ENCODE measurements at regions of chr7 and their contacts with region 1.

Region 1: DNA sequence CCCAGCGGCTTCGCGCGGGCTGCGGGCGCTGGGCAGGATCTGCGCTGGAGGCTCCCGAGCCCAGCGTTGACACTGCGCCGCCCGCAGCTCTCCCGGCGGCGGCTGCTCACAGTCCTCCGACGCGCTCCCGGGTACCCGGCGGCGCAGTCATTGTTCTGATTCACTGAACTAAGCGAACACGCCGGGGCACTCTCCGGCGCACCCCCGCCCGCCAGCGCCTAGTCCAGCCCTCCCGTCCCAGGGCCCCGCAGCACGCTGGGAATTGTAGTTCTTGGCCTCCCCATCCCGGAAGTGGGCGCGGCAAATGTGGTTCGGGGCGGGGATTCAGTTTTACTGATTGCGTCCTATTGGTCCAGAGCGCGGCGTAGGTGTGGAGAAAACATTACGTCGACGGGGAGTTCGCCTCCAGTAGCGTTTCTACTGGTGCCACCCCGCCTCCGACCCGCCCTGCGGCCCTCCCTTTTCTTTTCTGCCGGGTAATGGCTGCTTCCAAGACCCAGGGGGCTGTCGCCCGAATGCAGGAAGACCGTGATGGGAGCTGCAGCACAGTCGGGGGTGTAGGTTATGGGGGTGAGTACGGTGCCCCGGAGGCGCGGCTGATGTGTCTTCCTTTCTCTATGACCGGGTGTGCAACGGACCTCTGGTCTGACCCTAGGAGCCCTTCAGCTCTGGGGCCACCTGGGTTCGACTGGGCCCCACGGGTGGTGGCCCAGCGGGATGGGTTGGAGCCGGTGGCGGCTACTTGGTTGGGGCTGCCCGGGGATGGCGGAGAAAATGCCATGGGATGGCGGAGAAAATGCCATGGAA is at the starts of genes DOCK4 and ZNF277:
- DNase-seq: peak; percentile 99
- ATAC-seq: peak; percentile 80
- H3K4me3 ChIP-seq: peak within 1 kb of the TSS; percentile 94
- H3K27ac ChIP-seq: peak within 1 kb of the TSS; percentile 35
- H3K4me1 ChIP-seq: peaks cover 24% of the 10 kb centered on the region
- H3K27me3 ChIP-seq: no peaks in the 10 kb centered on the region
- CTCF ChIP-seq: no peak
- total RNA-seq, gene DOCK4: 21.8 and 25.4 TPM in 2 replicates
- total RNA-seq, gene ZNF277: 8.7 and 14.0 TPM in 2 replicates

Region 2: DNA sequence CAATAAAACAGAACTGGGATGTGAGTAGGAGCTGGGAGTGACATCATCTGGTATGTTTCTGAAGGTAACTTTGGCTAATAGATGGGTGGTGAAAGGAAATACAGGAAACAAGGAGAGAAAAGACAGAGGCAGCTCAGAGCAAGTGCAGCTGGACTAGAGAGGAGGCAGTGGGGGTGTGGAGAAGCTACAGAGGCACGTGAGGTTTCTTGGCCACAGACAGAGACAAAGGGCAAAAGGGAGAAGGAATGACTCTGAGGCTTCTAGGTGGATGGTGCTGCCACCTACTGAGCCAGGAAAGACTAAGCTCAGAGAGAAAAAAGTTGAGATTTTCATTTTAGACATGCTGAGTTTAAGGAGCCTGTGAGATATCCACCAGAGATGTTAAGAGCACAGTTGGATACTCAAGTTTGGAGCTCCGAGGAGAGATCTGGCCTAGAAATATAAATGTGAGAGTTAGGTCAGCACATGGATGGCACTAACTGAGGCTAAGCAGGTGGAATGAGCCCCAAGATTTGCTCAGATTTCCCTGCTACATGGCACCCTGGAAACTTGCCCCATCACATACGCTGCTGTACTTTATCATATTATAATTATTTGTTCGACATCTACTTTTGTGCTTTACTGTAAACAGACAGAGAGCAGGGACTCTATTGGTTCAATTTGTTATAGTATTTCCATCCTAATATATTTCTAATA is 351.1 kb before region 1 on chr7:
- CTCF ChIA-PET with region 1: no interaction called
- POLR2A ChIA-PET with region 1: no interaction called
- intact Hi-C with region 1: loop called (anchors 5 kb)
- DNase-seq: peak; percentile 62
- ATAC-seq: peak; percentile 79
- H3K4me3 ChIP-seq: no peak overlapping the region
- H3K27ac ChIP-seq: no peak overlapping the region
- H3K4me1 ChIP-seq: no peaks in the 10 kb centered on the region
- H3K27me3 ChIP-seq: no peaks in the 10 kb centered on the region
- CTCF ChIP-seq: peak; percentile 71

Region 3: GRCh38 chr7:112009081-112009480 is 197.4 kb before region 1 on chr7:
- CTCF ChIA-PET with region 1: no interaction called
- POLR2A ChIA-PET with region 1: no interaction called
- intact Hi-C with region 1: loop called (anchors 2 kb)
- DNase-seq: peak; percentile 77
- ATAC-seq: peak; percentile 82
- H3K4me3 ChIP-seq: no peak overlapping the region
- H3K27ac ChIP-seq: peak overlapping the region; percentile 65
- H3K4me1 ChIP-seq: peaks cover 32% of the 10 kb centered on the region
- H3K27me3 ChIP-seq: no peaks in the 10 kb centered on the region
- CTCF ChIP-seq: no peak

Region 4: DNA sequence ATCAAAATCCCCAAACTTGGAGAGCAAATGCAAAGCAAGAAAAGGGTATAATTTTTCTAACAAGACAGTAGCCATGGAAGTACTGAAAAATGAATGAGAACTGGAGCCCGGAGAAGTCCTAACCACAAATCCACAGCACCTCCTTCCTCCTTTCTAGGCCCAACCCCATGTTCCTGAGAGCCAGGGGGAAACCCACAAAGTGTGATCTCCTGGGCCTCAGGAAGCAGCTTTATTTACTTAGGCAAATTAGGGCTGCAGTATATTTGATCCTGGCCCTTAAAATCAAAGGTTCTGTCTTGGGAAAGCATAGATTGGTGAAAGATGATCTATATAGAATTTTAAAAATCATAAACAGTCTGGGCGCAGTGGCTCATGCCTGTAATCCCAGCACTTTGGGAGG is 103.2 kb before region 1 on chr7:
- CTCF ChIA-PET with region 1: no interaction called
- POLR2A ChIA-PET with region 1: interaction called, 19 read pairs
- intact Hi-C with region 1: no loop called
- DNase-seq: peak; percentile 37
- ATAC-seq: peak; percentile 78
- H3K4me3 ChIP-seq: no peak overlapping the region
- H3K27ac ChIP-seq: 0 out of 2 replicates have a peak overlapping the region, but pooled peaks have one; percentile 7
- H3K4me1 ChIP-seq: peaks cover 13% of the 10 kb centered on the region
- H3K27me3 ChIP-seq: no peaks in the 10 kb centered on the region
- CTCF ChIP-seq: no peak

Region 5: DNA sequence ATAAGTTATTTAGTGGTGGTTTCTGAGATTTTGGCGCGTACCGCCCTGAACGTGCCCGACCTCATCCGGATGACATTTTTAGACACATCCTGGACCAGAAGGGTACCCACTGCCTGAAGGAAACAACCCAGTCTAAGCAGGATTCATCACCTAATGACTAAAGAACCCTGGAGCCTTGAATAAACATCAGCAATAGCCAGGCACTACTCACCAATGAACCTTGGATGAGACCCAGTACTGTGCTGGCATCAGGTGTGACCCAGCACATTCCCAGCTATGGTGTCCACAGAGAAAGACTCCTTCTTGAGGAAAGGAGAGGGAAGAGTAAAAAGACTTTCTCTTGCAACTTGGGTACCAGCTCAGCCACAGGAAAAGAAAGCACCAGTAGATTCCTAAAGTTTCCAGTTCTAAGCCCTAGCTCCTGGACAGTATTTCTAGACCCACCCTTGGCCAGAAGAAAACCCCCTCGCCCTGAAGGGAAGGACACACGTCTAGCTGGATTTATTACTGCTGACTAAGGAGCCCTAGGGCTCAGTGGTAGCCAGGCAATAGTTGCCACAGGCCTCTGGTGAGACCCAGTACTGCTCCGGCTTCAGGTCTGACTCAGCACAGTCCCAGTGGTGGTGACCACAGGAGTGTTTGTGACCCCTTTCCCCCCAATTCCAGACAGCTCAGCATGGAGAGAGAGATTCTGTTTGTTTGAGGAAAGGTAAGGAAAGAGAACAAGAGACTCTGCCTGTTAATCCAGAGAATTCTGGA is 32.6 kb after region 1 on chr7:
- CTCF ChIA-PET with region 1: interaction called, 3 read pairs
- POLR2A ChIA-PET with region 1: no interaction called
- intact Hi-C with region 1: loop called (anchors 2 kb)
- DNase-seq: peak; percentile 94
- ATAC-seq: peak; percentile 93
- H3K4me3 ChIP-seq: peak overlapping the region; percentile 40; the same call in 1 of the 2 replicates
- H3K27ac ChIP-seq: peak overlapping the region; percentile 93
- H3K4me1 ChIP-seq: peaks cover 49% of the 10 kb centered on the region
- H3K27me3 ChIP-seq: no peaks in the 10 kb centered on the region
- CTCF ChIP-seq: no peak

Region 6: GRCh38 chr7:112414855-112415490 is 208.5 kb after region 1 on chr7:
- CTCF ChIA-PET with region 1: no interaction called
- POLR2A ChIA-PET with region 1: no interaction called
- intact Hi-C with region 1: loop called (anchors 1 kb)
- DNase-seq: peak; percentile 70
- ATAC-seq: peak; percentile 83
- H3K4me3 ChIP-seq: no peak overlapping the region
- H3K27ac ChIP-seq: no peak overlapping the region
- H3K4me1 ChIP-seq: peaks cover 11% of the 10 kb centered on the region; the same call in 1 of the 2 replicates
- H3K27me3 ChIP-seq: no peaks in the 10 kb centered on the region
- CTCF ChIP-seq: peak; percentile 78

Measured in PC-3 (cell line).